ENCODE measurements at regions of chr2 and their contacts with region 1.

Region 1: GRCh38 chr2:14288016-14288415 is 344.5 kb upstream of the LRATD1 start:
- DNase-seq: peak; percentile 62 to 78
- H3K4me3 ChIP-seq: no peak overlapping the region
- H3K4me3 Mint-ChIP-seq: no peak overlapping the region
- H3K27ac Mint-ChIP-seq: no peak overlapping the region
- H3K4me1 ChIP-seq: no peaks in the 10 kb centered on the region
- H3K4me1 Mint-ChIP-seq: no peaks in the 10 kb centered on the region
- H3K27me3 ChIP-seq: no peaks in the 10 kb centered on the region
- H3K27me3 Mint-ChIP-seq: no peaks in the 10 kb centered on the region
- CTCF ChIP-seq: peak in 1 of 2 experiments; percentile 6

Region 2: GRCh38 chr2:14340703-14341102 is 52.7 kb after region 1 on chr2:
- CTCF ChIA-PET with region 1: no interaction called
- POLR2A ChIA-PET with region 1: no interaction called
- intact Hi-C with region 1: no loop called
- DNase-seq: no peak
- H3K4me3 ChIP-seq: no peak overlapping the region
- H3K4me3 Mint-ChIP-seq: no peak overlapping the region
- H3K27ac Mint-ChIP-seq: no peak overlapping the region
- H3K4me1 ChIP-seq: no peaks in the 10 kb centered on the region
- H3K4me1 Mint-ChIP-seq: no peaks in the 10 kb centered on the region
- H3K27me3 ChIP-seq: no peaks in the 10 kb centered on the region
- H3K27me3 Mint-ChIP-seq: no peaks in the 10 kb centered on the region
- CTCF ChIP-seq: no peak

Region 3: GRCh38 chr2:14354216-14354615 is 66.2 kb after region 1 on chr2:
- CTCF ChIA-PET with region 1: no interaction called
- POLR2A ChIA-PET with region 1: no interaction called
- intact Hi-C with region 1: loop called (anchors 1 kb)
- DNase-seq: peak; percentile 49 to 65
- H3K4me3 ChIP-seq: no peak overlapping the region
- H3K4me3 Mint-ChIP-seq: no peak overlapping the region
- H3K27ac Mint-ChIP-seq: no peak overlapping the region
- H3K4me1 ChIP-seq: peaks cover 11% of the 10 kb centered on the region
- H3K4me1 Mint-ChIP-seq: no peaks in the 10 kb centered on the region
- H3K27me3 ChIP-seq: no peaks in the 10 kb centered on the region
- H3K27me3 Mint-ChIP-seq: no peaks in the 10 kb centered on the region
- CTCF ChIP-seq: no peak

Region 4: DNA sequence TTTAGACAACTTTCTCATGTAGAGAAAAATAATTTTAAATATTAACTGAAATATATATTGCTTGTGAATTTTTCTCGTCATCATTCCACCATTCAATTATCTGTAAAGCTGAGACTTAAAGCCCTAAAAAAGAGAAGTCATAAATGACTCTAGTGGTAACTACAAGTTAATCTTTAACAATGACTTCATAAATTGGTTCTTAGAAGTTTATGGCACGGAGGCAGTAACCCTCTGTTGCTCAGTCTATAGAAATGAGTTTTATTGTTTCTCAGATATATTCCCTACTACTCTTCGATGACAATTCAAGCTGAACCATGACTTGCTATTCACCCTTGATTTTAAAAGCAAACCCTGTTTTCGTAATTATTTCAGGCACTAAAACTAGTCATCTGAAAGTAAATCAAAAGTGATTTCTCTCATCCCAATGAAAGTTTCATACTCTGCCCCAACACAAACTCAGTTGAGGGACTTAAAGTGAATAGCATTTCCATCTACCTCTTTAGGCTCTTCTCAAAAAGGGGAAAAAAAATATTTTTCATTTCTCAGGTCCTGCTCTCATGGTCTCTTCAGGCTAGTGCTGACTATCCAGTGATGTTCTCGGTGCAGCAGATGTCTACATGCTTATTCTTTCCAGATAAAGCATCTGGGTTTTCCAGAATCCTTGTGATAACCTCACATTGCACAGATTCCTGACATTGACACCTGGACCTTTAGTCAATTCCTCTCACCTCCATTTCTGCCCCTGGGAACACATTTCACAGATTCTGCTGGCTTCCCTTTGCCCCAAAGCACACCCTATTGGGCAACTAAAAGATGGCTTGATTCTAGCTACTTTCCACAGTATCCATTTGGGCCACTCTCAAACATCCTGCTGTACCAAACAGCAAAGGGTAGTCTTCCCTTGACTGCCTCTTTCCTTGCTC is 136.7 kb after region 1 on chr2:
- CTCF ChIA-PET with region 1: no interaction called
- POLR2A ChIA-PET with region 1: no interaction called
- intact Hi-C with region 1: loop called (anchors 1 kb)
- DNase-seq: no peak
- H3K4me3 ChIP-seq: no peak overlapping the region
- H3K4me3 Mint-ChIP-seq: no peak overlapping the region
- H3K27ac Mint-ChIP-seq: no peak overlapping the region
- H3K4me1 ChIP-seq: peaks cover 12% of the 10 kb centered on the region; the same call in 1 of the 2 replicates
- H3K4me1 Mint-ChIP-seq: no peaks in the 10 kb centered on the region
- H3K27me3 ChIP-seq: no peaks in the 10 kb centered on the region
- H3K27me3 Mint-ChIP-seq: no peaks in the 10 kb centered on the region
- CTCF ChIP-seq: no peak

Region 5: DNA sequence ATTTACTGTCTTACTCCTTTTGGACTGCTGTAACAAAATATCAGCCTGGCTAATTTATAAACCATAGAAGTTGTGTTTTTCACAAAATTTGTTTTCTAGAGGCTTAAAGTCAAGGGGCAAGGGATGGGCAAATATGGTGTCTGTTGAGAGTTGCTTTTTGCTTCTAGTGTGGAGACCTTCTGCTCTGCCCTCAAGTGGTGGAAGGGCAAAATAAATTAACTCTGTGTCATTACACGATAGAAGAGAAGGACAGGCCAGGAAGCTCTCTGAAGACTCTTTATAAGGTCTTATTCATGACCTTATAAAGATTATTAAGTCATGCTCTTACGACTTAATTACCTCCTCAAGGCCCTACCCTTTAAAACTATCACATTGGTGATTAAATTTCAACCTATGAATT is 163.3 kb after region 1 on chr2:
- CTCF ChIA-PET with region 1: no interaction called
- POLR2A ChIA-PET with region 1: no interaction called
- intact Hi-C with region 1: loop called (anchors 1 kb)
- DNase-seq: no peak
- H3K4me3 ChIP-seq: no peak overlapping the region
- H3K4me3 Mint-ChIP-seq: no peak overlapping the region
- H3K27ac Mint-ChIP-seq: no peak overlapping the region
- H3K4me1 ChIP-seq: no peaks in the 10 kb centered on the region
- H3K4me1 Mint-ChIP-seq: no peaks in the 10 kb centered on the region
- H3K27me3 ChIP-seq: no peaks in the 10 kb centered on the region
- H3K27me3 Mint-ChIP-seq: no peaks in the 10 kb centered on the region
- CTCF ChIP-seq: no peak

Region 6: GRCh38 chr2:14475994-14476393 is 188.0 kb after region 1 on chr2:
- CTCF ChIA-PET with region 1: no interaction called
- POLR2A ChIA-PET with region 1: no interaction called
- intact Hi-C with region 1: no loop called
- DNase-seq: no peak
- H3K4me3 ChIP-seq: no peak overlapping the region
- H3K4me3 Mint-ChIP-seq: no peak overlapping the region
- H3K27ac Mint-ChIP-seq: no peak overlapping the region
- H3K4me1 ChIP-seq: no peaks in the 10 kb centered on the region
- H3K4me1 Mint-ChIP-seq: no peaks in the 10 kb centered on the region
- H3K27me3 ChIP-seq: no peaks in the 10 kb centered on the region
- H3K27me3 Mint-ChIP-seq: no peaks in the 10 kb centered on the region
- CTCF ChIP-seq: no peak

Region 7: DNA sequence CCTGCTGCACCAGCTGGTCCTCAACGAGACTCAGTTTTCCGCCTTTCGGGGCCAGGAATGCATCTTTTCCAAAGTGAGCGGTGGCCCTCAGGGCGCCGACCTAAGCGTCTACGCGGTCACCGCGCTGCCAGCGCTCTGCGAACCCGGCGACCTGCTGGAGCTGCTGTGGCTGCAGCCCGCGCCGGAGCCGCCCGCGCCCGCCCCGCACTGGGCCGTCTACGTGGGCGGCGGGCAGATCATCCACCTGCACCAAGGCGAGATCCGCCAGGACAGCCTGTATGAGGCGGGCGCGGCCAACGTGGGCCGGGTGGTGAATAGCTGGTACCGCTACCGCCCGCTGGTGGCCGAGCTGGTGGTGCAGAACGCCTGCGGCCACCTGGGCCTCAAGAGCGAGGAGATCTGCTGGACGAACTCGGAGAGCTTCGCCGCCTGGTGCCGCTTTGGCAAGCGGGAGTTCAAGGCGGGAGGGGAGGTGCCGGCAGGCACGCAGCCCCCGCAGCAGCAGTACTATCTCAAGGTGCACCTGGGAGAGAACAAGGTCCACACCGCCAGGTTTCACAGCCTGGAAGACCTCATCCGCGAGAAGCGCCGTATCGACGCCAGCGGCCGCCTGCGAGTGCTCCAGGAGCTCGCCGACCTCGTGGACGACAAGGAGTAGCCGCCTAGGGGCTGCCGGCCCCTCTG is 346.3 kb after region 1 on chr2:
- CTCF ChIA-PET with region 1: no interaction called
- POLR2A ChIA-PET with region 1: no interaction called
- intact Hi-C with region 1: loop called (anchors 10 kb)
- DNase-seq: peak; percentile 62 to 72
- H3K4me3 ChIP-seq: peak overlapping the region; percentile 21
- H3K4me3 Mint-ChIP-seq: peak overlapping the region; percentile 63
- H3K27ac Mint-ChIP-seq: no peak overlapping the region
- H3K4me1 ChIP-seq: peaks cover 20% of the 10 kb centered on the region
- H3K4me1 Mint-ChIP-seq: no peaks in the 10 kb centered on the region
- H3K27me3 ChIP-seq: peaks cover 15% of the 10 kb centered on the region
- H3K27me3 Mint-ChIP-seq: peaks cover 22% of the 10 kb centered on the region
- CTCF ChIP-seq: peak; percentile 46

Measured in Caco-2 (cell line).